Heart left ventricle (tissue), 16 donors: ENCODE measurements at regions of chr2 and their contacts with region 1.

Region 1: GRCh38 chr2:42663106-42663780 is 94.8 kb downstream of the MTA3 start:
- DNase-seq: peak; percentile 48 to 70 (median 58)
- ATAC-seq: peak; percentile 59 to 92 (median 88)
- H3K4me3 ChIP-seq: no peak overlapping the region
- H3K27ac ChIP-seq: no peak overlapping the region
- H3K4me1 ChIP-seq: peaks cover 0 to 12% (median 0%) of the 10 kb centered on the region in 12 donors
- H3K27me3 ChIP-seq: no peaks in the 10 kb centered on the region
- CTCF ChIP-seq: peak; percentile 86 to 99 (median 95)
- POLR2A ChIP-seq: no peak

Region 2: DNA sequence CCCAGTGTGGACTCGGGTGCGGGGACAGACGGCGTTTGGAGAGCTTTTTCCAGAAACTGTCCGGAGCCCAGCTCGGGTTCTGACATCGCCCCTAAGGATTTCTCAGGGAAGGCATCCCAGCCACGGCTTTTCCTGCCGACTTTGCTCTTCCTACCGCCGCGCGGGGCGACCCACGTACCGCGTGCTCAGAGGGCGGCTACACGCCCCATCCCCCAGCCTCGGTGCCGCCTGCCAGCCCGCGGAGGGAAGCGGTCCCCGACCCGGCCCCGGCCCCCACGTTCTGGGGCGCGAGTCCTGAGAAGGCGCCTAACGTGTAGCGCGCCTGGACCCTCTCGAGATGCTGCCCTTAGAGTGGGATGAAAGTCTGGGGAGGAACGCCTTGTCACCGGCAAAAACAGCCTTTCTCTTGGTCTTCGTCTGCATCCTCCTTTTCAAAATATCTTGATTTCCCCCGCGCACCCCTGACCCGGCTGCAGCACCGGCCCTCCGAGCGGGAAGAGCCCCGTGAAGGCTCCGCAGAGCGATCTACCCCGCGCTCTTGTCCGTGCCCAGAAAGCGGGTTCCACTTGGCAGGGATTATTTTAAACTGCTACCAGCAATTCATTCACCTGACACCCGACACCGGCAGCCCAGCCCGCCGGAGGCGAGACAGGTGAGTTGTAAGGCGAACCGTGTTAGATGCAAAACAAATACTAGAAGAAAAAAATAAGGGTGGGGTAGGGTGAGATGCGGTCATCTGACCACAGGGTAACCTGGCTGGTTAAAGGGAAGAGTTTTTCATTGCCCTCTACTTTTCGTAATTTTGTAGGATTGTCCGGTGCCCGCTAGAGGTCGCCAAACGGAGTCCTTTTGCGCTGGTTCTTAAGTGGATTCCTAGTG is 168.6 kb before region 1 on chr2:
- intact Hi-C with region 1: loop called in 9 of 10 experiments (anchors 2 to 5 kb)
- DNase-seq: peak; percentile 44 to 69 (median 51)
- ATAC-seq: peak in 3 of 4 donors; percentile 58 to 72 (median 65)
- H3K4me3 ChIP-seq: peak overlapping the region; percentile 40 to 67 (median 56)
- H3K27ac ChIP-seq: no peak overlapping the region
- H3K4me1 ChIP-seq: peaks cover 0 to 22% (median 9%) of the 10 kb centered on the region in 12 donors
- H3K27me3 ChIP-seq: peaks cover 17 to 66% (median 32%) of the 10 kb centered on the region in 9 donors
- CTCF ChIP-seq: peak; percentile 78 to 90 (median 86)
- POLR2A ChIP-seq: no peak

Region 3: GRCh38 chr2:42513257-42513918 is 149.9 kb before region 1 on chr2:
- intact Hi-C with region 1: loop called in 9 of 10 experiments (anchors 5 kb)
- DNase-seq: no peak
- ATAC-seq: peak in 1 of 4 donors; percentile 69
- H3K4me3 ChIP-seq: no peak overlapping the region
- H3K27ac ChIP-seq: no peak overlapping the region
- H3K4me1 ChIP-seq: peaks cover 0 to 6% (median 0%) of the 10 kb centered on the region in 12 donors
- H3K27me3 ChIP-seq: no peaks in the 10 kb centered on the region
- CTCF ChIP-seq: peak; percentile 38 to 63 (median 52)
- POLR2A ChIP-seq: no peak

Region 4: GRCh38 chr2:42568401-42569115 is 94.7 kb before region 1 on chr2 and contains the start of gene MTA3:
- intact Hi-C with region 1: loop called in 1 of 10 experiments (anchors 5 kb)
- DNase-seq: peak; percentile 64 to 78 (median 72)
- ATAC-seq: peak; percentile 41 to 90 (median 71)
- H3K4me3 ChIP-seq: peak within 1 kb of the TSS; percentile 78 to 99 (median 94)
- H3K27ac ChIP-seq: peak within 1 kb of the TSS; percentile 69 to 93 (median 85)
- H3K4me1 ChIP-seq: peaks cover 0 to 24% (median 13%) of the 10 kb centered on the region in 12 donors
- H3K27me3 ChIP-seq: no peaks in the 10 kb centered on the region
- CTCF ChIP-seq: no peak
- POLR2A ChIP-seq: no peak
- total RNA-seq, gene MTA3: 15.3 to 31.8 (median 26.4) TPM

Region 5: GRCh38 chr2:42874949-42875801 is 211.9 kb after region 1 on chr2:
- intact Hi-C with region 1: no loop called
- DNase-seq: peak; percentile 75 to 84 (median 77)
- ATAC-seq: peak; percentile 56 to 85 (median 76)
- H3K4me3 ChIP-seq: no peak overlapping the region
- H3K27ac ChIP-seq: peak overlapping the region; percentile 74 to 93 (median 84)
- H3K4me1 ChIP-seq: peaks cover 6 to 81% (median 62%) of the 10 kb centered on the region in 12 donors
- H3K27me3 ChIP-seq: no peaks in the 10 kb centered on the region
- CTCF ChIP-seq: no peak
- POLR2A ChIP-seq: no peak